Common myeloid progenitor, CD34-positive (primary cell): ENCODE measurements at regions of chr10 and their contacts with region 1.

Region 1: DNA sequence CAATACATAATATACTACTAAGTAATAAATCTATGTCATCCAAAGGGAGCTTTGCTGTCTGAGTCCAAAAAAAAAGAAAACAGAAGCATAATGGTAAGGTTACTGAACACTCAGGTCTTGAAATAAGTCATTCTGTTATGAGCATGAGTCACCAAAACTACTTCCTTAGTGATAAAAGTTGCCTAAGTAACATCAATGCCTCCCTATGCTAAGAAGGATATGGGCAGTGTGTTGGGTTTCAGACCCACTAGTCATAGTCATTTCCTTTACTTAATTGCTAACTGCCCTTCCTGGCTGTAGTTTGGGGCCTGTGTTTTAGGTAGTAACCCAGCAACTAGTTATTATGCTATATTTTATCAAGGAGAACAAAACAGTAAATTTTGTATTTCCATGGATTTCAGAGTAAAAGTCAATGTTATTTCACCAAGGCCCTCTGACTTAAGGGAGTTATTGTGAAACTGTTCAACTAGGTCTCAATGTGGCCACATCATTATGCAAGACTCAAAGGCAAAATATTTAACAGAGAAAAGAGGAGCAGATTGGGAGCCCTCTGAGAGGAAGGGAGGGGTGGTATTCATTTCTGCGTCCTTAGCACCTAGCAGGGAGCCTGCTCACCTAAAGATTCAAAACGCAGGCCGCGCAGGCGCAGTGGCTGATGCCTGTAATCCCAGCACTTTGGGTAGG is 11.7 kb upstream of the VIM start:
- DNase-seq: peak; percentile 97 to 99 (median 98)
- H3K4me3 ChIP-seq: peak overlapping the region in 3 of 7 experiments; percentile 11 to 48 (median 39)
- H3K27ac ChIP-seq: peak overlapping the region; percentile 100
- H3K4me1 ChIP-seq: peaks cover 21 to 54% (median 42%) of the 10 kb centered on the region in 4 experiments
- H3K27me3 ChIP-seq: no peaks in the 10 kb centered on the region

Region 2: GRCh38 chr10:17138460-17139042 is 77.8 kb before region 1 on chr10:
- CTCF ChIA-PET with region 1: no interaction called
- POLR2A ChIA-PET with region 1: no interaction called
- DNase-seq: no peak
- H3K4me3 ChIP-seq: no peak overlapping the region
- H3K27ac ChIP-seq: no peak overlapping the region
- H3K4me1 ChIP-seq: no peaks in the 10 kb centered on the region
- H3K27me3 ChIP-seq: no peaks in the 10 kb centered on the region

Region 3: DNA sequence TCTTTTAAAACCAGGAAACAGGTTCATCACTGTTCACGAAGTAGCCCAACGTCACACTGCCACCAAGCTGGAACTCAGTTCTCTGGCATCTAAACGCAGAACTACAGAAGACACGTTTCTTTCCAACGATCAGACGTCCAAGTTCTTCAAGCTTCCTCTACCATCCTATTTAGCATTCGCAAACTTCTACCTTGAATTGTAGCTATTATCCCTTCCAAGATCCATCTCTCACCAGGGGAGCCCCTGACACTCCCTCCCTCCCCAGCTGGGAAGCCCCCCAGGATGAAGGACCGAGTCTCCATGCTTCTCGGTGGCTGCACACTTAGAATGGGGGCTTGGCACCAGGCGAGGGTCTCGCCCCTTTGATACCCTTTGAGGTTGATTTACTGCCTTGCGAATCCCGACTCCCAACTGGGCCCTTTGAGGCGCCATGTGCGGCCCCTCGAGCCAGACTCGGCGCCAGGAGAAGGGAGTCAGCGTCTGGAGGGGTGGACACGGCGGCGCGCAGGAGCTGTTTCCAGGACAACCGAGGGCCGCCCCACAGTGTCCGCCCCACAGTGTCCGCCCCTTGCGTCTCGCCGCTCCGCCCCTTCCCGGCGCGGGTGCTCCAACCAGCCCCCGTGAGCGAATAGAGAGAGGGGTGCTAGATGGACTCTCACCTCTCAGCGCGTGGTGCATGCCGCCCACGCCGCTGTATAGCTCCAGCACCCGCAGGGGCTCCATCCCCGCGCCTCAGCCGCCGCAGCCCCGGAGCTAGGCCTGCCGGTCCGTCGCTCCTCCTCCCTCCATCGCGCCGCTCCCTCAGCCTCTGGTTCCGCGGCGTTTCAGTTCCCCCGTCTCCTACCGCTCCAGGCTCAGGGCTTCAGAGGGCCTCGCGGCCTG is 15.2 kb before region 1 on chr10 and contains the start of gene TRDMT1:
- CTCF ChIA-PET with region 1: interaction called, 20 read pairs
- POLR2A ChIA-PET with region 1: interaction called, 15 read pairs
- DNase-seq: peak; percentile 78 to 90 (median 83)
- H3K4me3 ChIP-seq: peak within 1 kb of the TSS; percentile 59 to 94 (median 84)
- H3K27ac ChIP-seq: peak within 1 kb of the TSS; percentile 94 to 98
- H3K4me1 ChIP-seq: peaks cover 10 to 43% (median 25%) of the 10 kb centered on the region in 4 experiments
- H3K27me3 ChIP-seq: no peaks in the 10 kb centered on the region

Region 4: GRCh38 chr10:17206210-17206709 is 10.1 kb before region 1 on chr10:
- CTCF ChIA-PET with region 1: interaction called, 20 read pairs
- POLR2A ChIA-PET with region 1: interaction called, 15 read pairs
- DNase-seq: peak; percentile 75 to 98 (median 96)
- H3K4me3 ChIP-seq: no peak overlapping the region
- H3K27ac ChIP-seq: peak overlapping the region; percentile 81 to 93
- H3K4me1 ChIP-seq: peaks cover 7 to 44% (median 30%) of the 10 kb centered on the region in 4 experiments
- H3K27me3 ChIP-seq: no peaks in the 10 kb centered on the region

Region 5: GRCh38 chr10:17228091-17228940 is 12.0 kb after region 1 on chr10 and contains the start of gene VIM:
- CTCF ChIA-PET with region 1: interaction called, 20 read pairs
- POLR2A ChIA-PET with region 1: interaction called, 33 read pairs
- DNase-seq: peak; percentile 95 to 99 (median 98)
- H3K4me3 ChIP-seq: peak within 1 kb of the TSS; percentile 91 to 98 (median 93)
- H3K27ac ChIP-seq: peak within 1 kb of the TSS; percentile 93 to 94
- H3K4me1 ChIP-seq: peaks cover 15 to 41% (median 30%) of the 10 kb centered on the region in 4 experiments
- H3K27me3 ChIP-seq: no peaks in the 10 kb centered on the region

Region 6: DNA sequence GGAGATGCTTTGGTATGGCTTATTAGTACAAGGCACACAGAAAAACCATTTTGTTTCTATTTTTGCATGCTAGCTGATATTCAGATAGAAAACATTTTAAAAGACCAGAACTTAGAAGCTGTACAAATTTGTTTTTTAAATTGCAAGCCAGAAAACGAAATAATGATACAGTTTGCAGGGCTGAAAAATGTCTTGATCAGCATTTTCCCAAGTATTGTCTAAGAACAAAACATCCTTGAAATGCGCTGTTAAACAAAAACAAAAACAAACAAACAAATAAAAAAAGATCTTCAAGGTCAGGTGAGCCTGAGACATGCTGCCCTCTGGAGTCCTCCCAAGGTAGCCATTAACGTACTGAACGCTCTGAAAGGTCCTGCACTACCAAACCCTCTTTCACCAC is 110.0 kb after region 1 on chr10:
- CTCF ChIA-PET with region 1: no interaction called
- POLR2A ChIA-PET with region 1: no interaction called
- DNase-seq: no peak
- H3K4me3 ChIP-seq: no peak overlapping the region
- H3K27ac ChIP-seq: no peak overlapping the region
- H3K4me1 ChIP-seq: no peaks in the 10 kb centered on the region
- H3K27me3 ChIP-seq: no peaks in the 10 kb centered on the region